ENCODE measurements at regions of chr7 and their contacts with region 1.

Region 1: DNA sequence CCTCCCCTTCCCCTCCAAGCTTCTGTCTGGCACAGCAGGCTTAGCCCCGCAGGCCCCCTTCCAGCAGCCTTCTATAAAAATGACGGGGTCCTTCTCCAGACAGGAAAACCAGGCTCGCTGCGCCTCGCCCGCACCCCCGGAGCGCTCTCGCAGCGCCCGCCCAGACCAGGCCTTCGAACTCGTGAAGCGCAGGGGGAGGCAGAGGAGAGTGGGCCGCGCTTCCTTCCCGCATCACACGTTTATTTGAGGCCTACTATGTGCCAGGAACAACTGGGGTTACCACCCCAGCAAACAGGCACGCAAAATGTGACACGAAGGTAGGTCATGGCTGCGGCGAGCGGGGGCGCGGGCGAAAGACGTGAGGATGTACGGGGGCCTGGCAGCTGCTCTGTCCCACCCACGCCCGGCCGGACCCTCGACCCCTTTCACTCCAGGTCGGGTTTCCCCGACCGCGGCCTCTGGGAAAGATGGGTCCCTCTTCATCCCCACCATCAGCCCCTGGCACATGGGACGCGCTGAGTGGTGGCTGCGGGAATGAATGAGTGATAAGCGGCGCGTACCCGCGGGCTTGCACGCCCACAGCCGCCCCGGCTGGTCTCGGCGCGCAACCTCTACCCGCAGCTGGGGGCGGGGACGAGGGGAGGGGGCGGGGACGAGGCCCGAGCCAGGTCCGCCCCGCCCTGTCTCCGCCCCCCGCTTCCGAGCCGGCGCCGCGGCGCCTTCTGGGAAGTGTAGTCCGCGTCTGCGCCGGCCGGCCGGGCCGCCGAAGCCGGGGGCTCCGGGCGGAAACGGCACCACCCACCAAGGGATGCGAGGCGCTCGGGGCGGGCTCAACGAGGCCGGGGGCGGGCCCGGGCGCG is 59.1 kb downstream of the ZNF467 start:
- DNase-seq: peak; percentile 97
- ATAC-seq: peak; percentile 89
- H3K4me3 Mint-ChIP-seq: peak overlapping the region; percentile 82
- H3K27ac Mint-ChIP-seq: peak overlapping the region; percentile 78
- H3K4me1 Mint-ChIP-seq: peaks cover 27% of the 10 kb centered on the region
- H3K27me3 Mint-ChIP-seq: no peaks in the 10 kb centered on the region

Region 2: DNA sequence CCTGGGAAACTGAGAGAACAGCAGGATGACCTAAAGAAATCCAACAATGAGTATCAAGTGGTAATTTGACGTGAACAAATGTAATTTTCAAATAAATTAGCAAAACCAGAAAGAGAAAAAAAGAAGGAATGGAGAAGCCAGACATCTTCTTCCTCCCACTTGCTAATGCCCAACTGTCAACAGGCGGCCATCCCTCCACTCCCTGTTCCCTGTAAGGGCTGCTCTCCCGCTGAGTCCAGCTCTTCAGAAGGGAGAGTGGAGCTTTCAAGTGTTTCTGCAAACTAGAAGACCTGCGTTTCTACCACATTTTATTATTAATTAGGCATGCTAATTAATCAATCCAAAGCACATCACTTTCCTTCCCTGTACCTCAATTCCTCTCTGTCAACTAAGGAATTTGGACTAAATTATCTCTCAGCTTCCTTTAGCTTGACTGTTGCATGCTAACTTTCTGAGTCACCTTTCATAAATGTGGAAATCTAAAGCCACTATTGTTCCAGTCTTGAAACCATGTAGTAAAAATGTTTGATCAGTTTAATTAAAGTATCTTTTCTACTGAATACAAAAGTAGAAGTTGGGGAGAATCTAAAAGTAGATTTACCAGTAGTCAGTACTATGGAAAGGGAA is 1063.9 kb before region 1 on chr7:
- CTCF ChIA-PET with region 1: no interaction called
- POLR2A ChIA-PET with region 1: no interaction called
- intact Hi-C with region 1: no loop called
- DNase-seq: no peak
- ATAC-seq: no peak
- H3K4me3 Mint-ChIP-seq: no peak overlapping the region
- H3K27ac Mint-ChIP-seq: no peak overlapping the region
- H3K4me1 Mint-ChIP-seq: no peaks in the 10 kb centered on the region
- H3K27me3 Mint-ChIP-seq: no peaks in the 10 kb centered on the region

Region 3: GRCh38 chr7:149028346-149029109 is 685.8 kb before region 1 on chr7 and contains the start of gene PDIA4:
- CTCF ChIA-PET with region 1: no interaction called
- POLR2A ChIA-PET with region 1: no interaction called
- intact Hi-C with region 1: loop called in 1 of 2 experiments (anchors 2 kb)
- DNase-seq: peak; percentile 100
- ATAC-seq: peak; percentile 92
- H3K4me3 Mint-ChIP-seq: peak within 1 kb of the TSS; percentile 99
- H3K27ac Mint-ChIP-seq: peak within 1 kb of the TSS; percentile 94
- H3K4me1 Mint-ChIP-seq: peaks cover 32% of the 10 kb centered on the region
- H3K27me3 Mint-ChIP-seq: no peaks in the 10 kb centered on the region
- total RNA-seq, gene PDIA4: 88.3 to 90.1 TPM

Region 4: DNA sequence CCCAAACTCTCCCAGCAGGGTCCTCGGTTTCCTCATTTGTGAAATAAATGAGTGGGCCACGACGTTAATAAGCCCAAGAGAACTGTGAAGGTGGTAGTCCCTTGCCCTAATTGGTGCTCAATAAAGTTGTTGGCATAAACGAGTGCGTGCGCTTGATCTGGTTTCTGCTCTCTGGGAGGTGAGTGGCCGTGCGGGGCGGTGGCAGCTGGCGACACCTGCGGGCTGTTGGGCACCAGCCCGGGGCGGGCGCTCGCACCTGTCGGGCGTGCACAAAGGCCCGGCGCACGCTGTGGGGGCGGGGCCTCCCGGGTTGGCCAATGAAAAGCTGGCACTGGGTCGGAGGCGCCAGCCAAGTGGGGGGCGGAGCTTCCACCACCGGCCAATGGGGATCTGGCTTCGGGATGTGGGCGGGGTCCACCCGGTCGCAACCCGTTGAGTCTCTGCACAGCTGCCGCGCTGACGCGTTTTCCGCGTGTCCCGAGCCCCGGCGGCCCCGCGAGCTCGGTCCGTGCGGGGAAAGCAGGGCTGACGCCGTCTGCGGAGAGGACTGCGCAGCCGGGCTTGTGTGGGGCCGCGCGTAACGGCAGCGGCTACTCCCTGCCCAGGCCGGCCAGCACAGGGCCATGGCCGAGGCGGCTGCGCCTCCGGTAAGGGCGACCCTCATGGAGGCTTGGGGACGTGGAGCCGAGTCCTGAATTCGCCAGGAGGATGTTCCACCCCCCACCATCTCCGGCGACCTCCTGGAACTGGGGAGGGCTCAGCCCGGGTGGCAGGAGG is 429.2 kb before region 1 on chr7:
- CTCF ChIA-PET with region 1: no interaction called
- POLR2A ChIA-PET with region 1: no interaction called
- intact Hi-C with region 1: loop called in 1 of 2 experiments (anchors 1 kb)
- DNase-seq: peak; percentile 99
- ATAC-seq: peak; percentile 99
- H3K4me3 Mint-ChIP-seq: peak overlapping the region; percentile 84
- H3K27ac Mint-ChIP-seq: peak overlapping the region; percentile 61
- H3K4me1 Mint-ChIP-seq: peaks cover 38% of the 10 kb centered on the region
- H3K27me3 Mint-ChIP-seq: no peaks in the 10 kb centered on the region

Region 5: GRCh38 chr7:149624419-149625339 is 89.6 kb before region 1 on chr7:
- CTCF ChIA-PET with region 1: interaction called, 4 read pairs
- POLR2A ChIA-PET with region 1: no interaction called
- intact Hi-C with region 1: loop called (anchors 1 kb)
- DNase-seq: peak; percentile 95
- ATAC-seq: peak; percentile 86
- H3K4me3 Mint-ChIP-seq: peak overlapping the region; percentile 80
- H3K27ac Mint-ChIP-seq: peak overlapping the region; percentile 80
- H3K4me1 Mint-ChIP-seq: peaks cover 38% of the 10 kb centered on the region
- H3K27me3 Mint-ChIP-seq: peaks cover 3% of the 10 kb centered on the region

Region 6: GRCh38 chr7:149838224-149838947 is 124.1 kb after region 1 on chr7 and contains the start of gene ZNF862:
- CTCF ChIA-PET with region 1: interaction called, 3 read pairs
- POLR2A ChIA-PET with region 1: interaction called, 3 read pairs
- intact Hi-C with region 1: loop called (anchors 1 to 5 kb)
- DNase-seq: peak; percentile 98
- ATAC-seq: peak; percentile 98
- H3K4me3 Mint-ChIP-seq: peak within 1 kb of the TSS; percentile 78
- H3K27ac Mint-ChIP-seq: peak within 1 kb of the TSS; percentile 74
- H3K4me1 Mint-ChIP-seq: peaks cover 28% of the 10 kb centered on the region
- H3K27me3 Mint-ChIP-seq: no peaks in the 10 kb centered on the region
- total RNA-seq, gene ZNF862: 17.6 to 18.3 TPM

Region 7: GRCh38 chr7:150404805-150405583 is 690.7 kb after region 1 on chr7:
- CTCF ChIA-PET with region 1: no interaction called
- POLR2A ChIA-PET with region 1: no interaction called
- intact Hi-C with region 1: loop called in 1 of 2 experiments (anchors 5 kb)
- DNase-seq: peak; percentile 85
- ATAC-seq: peak; percentile 74
- H3K4me3 Mint-ChIP-seq: peak overlapping the region; percentile 90
- H3K27ac Mint-ChIP-seq: peak overlapping the region; percentile 91
- H3K4me1 Mint-ChIP-seq: peaks cover 49% of the 10 kb centered on the region
- H3K27me3 Mint-ChIP-seq: no peaks in the 10 kb centered on the region